T-cell (primary cell): ENCODE measurements at regions of chr2 and their contacts with region 1.

Region 1: GRCh38 chr2:64092502-64092901 is 51.7 kb downstream of the PELI1 start:
- DNase-seq: no peak
- ATAC-seq: no peak
- H3K4me3 ChIP-seq: no peak overlapping the region
- H3K4me3 Mint-ChIP-seq: no peak overlapping the region
- H3K27ac ChIP-seq: no peak overlapping the region
- H3K27ac Mint-ChIP-seq: no peak overlapping the region
- H3K4me1 ChIP-seq: no peaks in the 10 kb centered on the region
- H3K4me1 Mint-ChIP-seq: peaks cover 4 to 16% (median 14%) of the 10 kb centered on the region in 3 donors
- H3K27me3 ChIP-seq: no peaks in the 10 kb centered on the region
- H3K27me3 Mint-ChIP-seq: no peaks in the 10 kb centered on the region

Region 2: DNA sequence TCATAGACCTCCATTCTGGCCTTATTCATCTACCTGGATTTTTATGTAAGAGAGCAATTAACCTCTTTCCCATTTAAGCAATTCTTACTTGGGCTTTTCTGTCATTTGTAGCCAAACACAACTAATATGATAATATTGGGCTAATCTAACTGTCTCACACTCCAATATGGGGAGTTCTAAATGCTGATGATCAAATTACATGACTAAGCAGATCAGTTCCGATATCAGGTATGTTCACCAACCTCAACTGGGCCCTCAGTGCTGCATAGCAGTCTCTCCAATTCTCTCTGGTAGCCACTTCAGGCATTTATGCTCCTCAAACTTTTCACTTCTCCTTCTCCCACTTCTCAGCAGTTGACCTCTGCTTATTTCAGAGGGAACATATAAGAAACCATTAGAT is 12.3 kb before region 1 on chr2:
- CTCF ChIA-PET with region 1: no interaction called
- POLR2A ChIA-PET with region 1: no interaction called
- DNase-seq: no peak
- ATAC-seq: peak in 1 of 4 experiments; percentile 20
- H3K4me3 ChIP-seq: no peak overlapping the region
- H3K4me3 Mint-ChIP-seq: no peak overlapping the region
- H3K27ac ChIP-seq: no peak overlapping the region
- H3K27ac Mint-ChIP-seq: no peak overlapping the region
- H3K4me1 ChIP-seq: no peaks in the 10 kb centered on the region
- H3K4me1 Mint-ChIP-seq: no peaks in the 10 kb centered on the region
- H3K27me3 ChIP-seq: no peaks in the 10 kb centered on the region
- H3K27me3 Mint-ChIP-seq: no peaks in the 10 kb centered on the region

Region 3: DNA sequence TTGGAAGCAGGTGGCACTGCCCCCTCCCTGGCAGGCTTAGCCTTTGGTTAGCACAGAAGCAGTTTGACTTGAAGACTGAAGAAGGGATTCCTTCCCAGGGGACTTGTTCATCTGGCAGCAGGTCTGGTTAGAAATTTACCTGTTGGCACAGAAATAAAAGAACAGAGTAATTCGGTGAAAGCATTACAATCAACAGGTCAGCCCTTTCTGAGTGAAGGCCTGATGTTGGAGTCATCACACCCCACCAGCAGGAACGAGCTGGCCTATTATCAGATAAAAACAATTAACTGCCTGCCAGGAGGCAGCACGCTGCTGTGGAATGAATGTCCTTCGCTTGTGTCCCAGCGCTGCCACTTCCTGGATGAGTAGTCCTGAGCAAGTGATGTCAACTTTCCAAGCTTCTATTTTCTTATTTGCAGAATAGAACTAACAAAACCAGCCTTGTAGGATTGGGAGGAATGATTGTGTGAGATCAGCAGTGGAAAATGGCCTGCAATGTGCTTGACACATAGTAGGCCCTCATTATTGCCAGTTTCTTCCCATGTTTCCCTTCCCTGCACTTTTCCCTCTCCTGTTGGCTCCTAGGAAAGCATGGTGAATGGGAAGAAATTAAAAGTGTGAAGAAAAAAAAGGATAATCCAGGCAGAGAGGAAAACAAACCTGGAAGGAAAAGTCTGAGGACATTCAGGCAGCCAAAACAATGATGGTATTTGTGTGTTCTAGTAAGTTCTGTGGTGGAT is 390.4 kb after region 1 on chr2:
- CTCF ChIA-PET with region 1: no interaction called
- POLR2A ChIA-PET with region 1: interaction called in 1 of 2 experiments, 15 read pairs
- DNase-seq: no peak
- ATAC-seq: no peak
- H3K4me3 ChIP-seq: no peak overlapping the region
- H3K4me3 Mint-ChIP-seq: no peak overlapping the region
- H3K27ac ChIP-seq: no peak overlapping the region
- H3K27ac Mint-ChIP-seq: no peak overlapping the region
- H3K4me1 ChIP-seq: peaks cover 0 to 5% of the 10 kb centered on the region in 2 experiments
- H3K4me1 Mint-ChIP-seq: peaks cover 2 to 11% (median 4%) of the 10 kb centered on the region in 3 donors
- H3K27me3 ChIP-seq: peaks cover 0 to 6% of the 10 kb centered on the region in 2 experiments
- H3K27me3 Mint-ChIP-seq: peaks cover 1 to 5% of the 10 kb centered on the region in 2 donors

Region 4: DNA sequence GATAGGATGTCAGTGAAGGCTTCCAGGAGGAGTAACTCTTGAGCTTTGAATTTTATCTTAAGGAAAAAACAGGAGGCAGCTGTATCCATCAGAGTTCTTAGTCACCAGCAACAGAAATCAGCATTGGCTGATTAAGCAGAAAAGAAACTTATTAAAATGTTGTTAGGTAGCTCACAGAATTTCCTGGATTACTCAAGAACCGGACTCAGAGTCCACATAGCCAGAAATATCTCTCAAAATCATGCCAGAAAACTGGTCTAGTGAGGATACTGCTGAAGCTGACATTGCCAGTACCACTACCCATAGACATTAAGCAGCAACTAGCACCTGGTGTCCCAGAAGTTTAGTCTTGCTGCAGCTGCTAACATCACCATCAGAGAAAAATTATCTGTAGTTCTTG is 421.5 kb after region 1 on chr2:
- CTCF ChIA-PET with region 1: no interaction called
- POLR2A ChIA-PET with region 1: interaction called in 1 of 2 experiments, 23 read pairs
- DNase-seq: no peak
- ATAC-seq: no peak
- H3K4me3 ChIP-seq: no peak overlapping the region
- H3K4me3 Mint-ChIP-seq: no peak overlapping the region
- H3K27ac ChIP-seq: no peak overlapping the region
- H3K27ac Mint-ChIP-seq: no peak overlapping the region
- H3K4me1 ChIP-seq: no peaks in the 10 kb centered on the region
- H3K4me1 Mint-ChIP-seq: no peaks in the 10 kb centered on the region
- H3K27me3 ChIP-seq: peaks cover 0 to 2% of the 10 kb centered on the region in 2 experiments
- H3K27me3 Mint-ChIP-seq: peaks cover 0 to 1% of the 10 kb centered on the region in 2 donors